Tibial artery (tissue), 4 donors: ENCODE measurements at regions of chr2 and their contacts with region 1.

Region 1: DNA sequence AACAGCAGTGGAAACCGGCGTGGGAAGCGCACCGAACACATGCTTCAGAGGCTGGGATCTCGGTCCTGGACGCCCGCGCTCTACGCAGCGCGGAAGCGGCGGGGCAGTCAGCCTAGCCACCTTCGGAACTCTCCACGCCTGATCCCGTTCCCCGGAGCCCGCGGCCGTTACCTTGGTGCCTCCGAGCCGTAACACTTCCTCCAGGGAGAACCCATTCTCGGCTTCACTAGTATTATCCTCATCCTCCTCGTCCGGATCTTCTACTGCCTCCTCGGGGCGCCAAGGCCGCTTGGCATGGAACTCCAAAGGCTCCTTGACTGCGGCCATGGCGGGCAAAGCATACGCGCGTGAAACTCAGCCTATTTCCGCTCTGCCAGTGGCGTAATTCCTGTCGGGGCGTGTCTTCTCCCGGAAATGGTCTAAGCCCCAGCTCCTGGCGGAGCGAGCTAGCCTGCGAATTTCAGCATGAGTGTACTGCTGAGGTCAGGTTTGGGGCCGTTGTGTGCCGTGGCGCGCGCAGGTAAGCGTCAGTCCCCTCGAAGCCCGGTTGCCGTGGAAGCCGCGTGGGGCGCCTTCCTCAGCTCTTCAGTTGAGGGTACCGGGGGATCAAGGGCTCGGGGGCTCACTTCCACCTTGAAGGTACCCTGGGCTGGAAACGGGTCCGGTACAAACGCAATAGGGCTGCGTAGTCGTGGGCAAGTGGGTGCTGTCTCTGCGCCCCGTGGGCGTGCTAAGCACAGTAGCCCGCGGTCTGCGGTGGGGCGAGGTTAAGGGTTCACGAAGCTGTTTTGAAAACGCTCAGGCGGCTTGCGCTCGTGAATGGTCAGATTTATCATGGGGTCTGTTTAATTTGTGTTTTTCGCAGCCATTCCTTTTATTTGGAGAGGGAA is at the starts of genes CEBPZ and NDUFAF7:
- DNase-seq: peak; percentile 93 to 95
- H3K4me3 ChIP-seq: peak within 1 kb of the TSS; percentile 79 to 98
- H3K27ac ChIP-seq: peak within 1 kb of the TSS; percentile 85 to 97
- H3K4me1 ChIP-seq: peaks cover 0 to 49% (median 25%) of the 10 kb centered on the region in 4 donors
- H3K27me3 ChIP-seq: no peaks in the 10 kb centered on the region
- CTCF ChIP-seq: no peak

Region 2: GRCh38 chr2:37052600-37053332 is 178.7 kb before region 1 on chr2:
- intact Hi-C with region 1: no loop called
- DNase-seq: no peak
- H3K4me3 ChIP-seq: no peak overlapping the region
- H3K27ac ChIP-seq: no peak overlapping the region
- H3K4me1 ChIP-seq: no peaks in the 10 kb centered on the region
- H3K27me3 ChIP-seq: no peaks in the 10 kb centered on the region
- CTCF ChIP-seq: no peak

Region 3: DNA sequence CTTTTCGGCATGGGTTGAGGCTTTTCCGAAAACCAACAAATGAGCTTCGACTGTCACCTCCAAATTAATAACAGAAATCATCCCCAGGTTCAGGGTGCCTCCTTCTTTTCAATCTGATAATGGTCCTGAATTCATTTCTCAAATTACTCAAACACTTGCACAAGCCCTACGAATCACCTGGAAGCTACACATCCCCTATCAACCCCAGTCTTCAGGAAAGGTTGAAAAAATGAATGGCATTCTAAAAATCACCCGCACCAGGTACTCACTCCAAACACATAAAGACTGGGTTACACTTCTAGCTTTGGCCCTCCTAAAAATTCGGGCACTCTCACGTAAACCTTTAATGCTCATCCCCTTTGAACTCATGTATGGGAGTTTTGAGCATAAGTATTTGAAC is 98.6 kb before region 1 on chr2:
- intact Hi-C with region 1: no loop called
- DNase-seq: no peak
- H3K4me3 ChIP-seq: no peak overlapping the region
- H3K27ac ChIP-seq: no peak overlapping the region
- H3K4me1 ChIP-seq: no peaks in the 10 kb centered on the region
- H3K27me3 ChIP-seq: no peaks in the 10 kb centered on the region
- CTCF ChIP-seq: no peak

Region 4: DNA sequence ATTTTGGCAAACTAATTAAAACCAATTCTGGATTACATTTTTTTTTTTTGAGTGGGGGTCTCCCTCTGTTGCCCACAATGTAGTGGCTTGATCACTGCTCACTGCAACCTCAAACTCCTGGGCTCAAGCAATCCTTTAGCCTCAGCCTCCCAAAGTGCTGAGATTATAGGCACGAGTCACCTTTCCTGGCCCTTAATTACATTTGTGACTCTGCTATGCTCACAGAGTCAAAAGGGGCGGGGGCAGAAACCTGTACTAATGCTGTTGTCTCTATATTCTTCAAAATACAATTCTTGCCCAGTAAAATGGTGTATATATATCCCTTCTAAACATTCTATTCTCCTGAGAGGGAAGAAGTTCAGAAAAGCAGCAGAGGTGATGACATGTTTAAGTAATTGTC is 69.9 kb after region 1 on chr2:
- intact Hi-C with region 1: no loop called
- DNase-seq: no peak
- H3K4me3 ChIP-seq: no peak overlapping the region
- H3K27ac ChIP-seq: no peak overlapping the region
- H3K4me1 ChIP-seq: peaks cover 0 to 6% (median 3%) of the 10 kb centered on the region in 4 donors
- H3K27me3 ChIP-seq: no peaks in the 10 kb centered on the region
- CTCF ChIP-seq: no peak

Region 5: DNA sequence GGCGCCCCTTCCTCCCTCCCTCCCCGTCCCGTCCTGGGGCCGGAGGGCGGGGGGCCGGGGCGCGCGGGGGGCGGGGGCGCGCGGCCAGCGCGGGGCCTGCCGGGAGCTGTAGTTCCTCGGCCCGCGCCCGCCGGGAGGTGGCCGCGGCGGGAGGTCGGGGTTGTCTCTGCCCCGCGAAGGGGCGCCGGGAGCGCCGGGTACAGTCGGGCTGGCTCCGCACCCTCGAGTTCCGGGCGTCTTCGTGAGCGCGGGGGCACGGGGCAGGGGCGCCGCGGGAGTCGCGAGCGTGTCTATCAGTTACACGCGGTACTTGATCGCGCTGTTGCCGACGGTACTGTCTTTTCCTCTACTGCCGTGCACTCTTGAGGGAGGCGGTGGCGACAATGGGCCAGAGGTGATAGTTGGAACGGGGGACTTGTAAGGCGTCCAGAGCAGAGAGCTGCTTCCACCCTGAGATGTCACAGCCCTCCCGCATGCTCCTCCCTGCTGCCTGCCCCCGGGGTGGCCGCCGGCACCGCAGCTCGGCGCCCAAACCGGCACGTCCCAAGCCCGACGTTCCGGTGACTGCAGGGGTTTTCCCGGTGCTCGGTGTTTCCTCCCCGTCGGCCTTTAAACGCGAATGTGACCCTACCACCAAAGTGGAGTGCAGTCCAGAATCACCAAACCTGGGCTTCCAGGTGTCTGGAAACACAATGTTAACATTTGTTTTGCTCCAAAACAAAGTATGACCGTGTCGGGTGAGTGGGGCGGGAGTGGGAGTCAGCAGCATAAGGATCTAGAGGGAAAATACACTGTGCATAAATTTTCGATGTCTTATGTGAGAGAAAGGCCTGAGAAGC is 93.5 kb after region 1 on chr2 and contains the start of gene PRKD3:
- intact Hi-C with region 1: loop called (anchors 10 kb)
- DNase-seq: peak; percentile 54 to 76
- H3K4me3 ChIP-seq: peak within 1 kb of the TSS; percentile 82 to 83
- H3K27ac ChIP-seq: peak within 1 kb of the TSS; percentile 96
- H3K4me1 ChIP-seq: peaks cover 0 to 37% (median 12%) of the 10 kb centered on the region in 4 donors
- H3K27me3 ChIP-seq: no peaks in the 10 kb centered on the region
- CTCF ChIP-seq: no peak

Region 6: DNA sequence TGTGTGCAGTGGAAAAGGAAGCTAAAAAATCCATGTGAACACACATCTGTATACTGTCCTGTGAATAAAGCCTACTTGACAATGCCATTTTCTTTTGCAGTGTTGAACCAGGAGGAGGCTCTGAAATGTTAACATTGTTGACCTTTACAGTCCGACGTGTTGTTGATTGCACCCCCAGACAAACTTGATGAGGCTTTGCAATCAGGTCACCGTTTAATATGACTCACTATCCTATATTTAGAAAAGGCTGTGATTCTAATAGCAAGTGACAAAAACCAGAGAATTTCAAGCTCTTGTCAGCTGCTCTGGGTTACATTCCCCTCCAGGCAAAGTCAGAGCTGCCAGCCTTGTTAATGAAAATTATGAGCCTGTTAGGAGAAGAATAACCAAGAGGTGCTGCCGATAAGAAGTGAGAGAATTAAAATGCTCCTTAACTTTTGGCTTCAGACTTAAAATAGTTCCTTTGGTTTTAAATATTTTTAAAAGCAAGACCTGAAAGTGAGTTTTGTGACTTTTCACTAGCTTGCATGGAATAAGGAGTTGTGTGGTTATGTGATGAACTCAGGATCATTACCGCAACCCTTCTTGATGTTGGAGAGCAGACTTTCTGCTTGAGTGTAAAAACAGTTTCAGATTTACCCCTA is 275.0 kb after region 1 on chr2:
- intact Hi-C with region 1: no loop called
- DNase-seq: no peak
- H3K4me3 ChIP-seq: no peak overlapping the region
- H3K27ac ChIP-seq: peak overlapping the region; percentile 38 to 51
- H3K4me1 ChIP-seq: peaks cover 0 to 28% (median 15%) of the 10 kb centered on the region in 4 donors
- H3K27me3 ChIP-seq: no peaks in the 10 kb centered on the region
- CTCF ChIP-seq: no peak